ENCODE measurements at regions of chr15 and their contacts with region 1.

Region 1: GRCh38 chr15:78492872-78493271 is 14.5 kb upstream of the HYKK start:
- DNase-seq: no peak
- H3K4me3 Mint-ChIP-seq: no peak overlapping the region
- H3K27ac Mint-ChIP-seq: peak overlapping the region; percentile 37
- H3K4me1 Mint-ChIP-seq: peaks cover 9% of the 10 kb centered on the region
- H3K27me3 Mint-ChIP-seq: no peaks in the 10 kb centered on the region

Region 2: GRCh38 chr15:78276064-78276943 is 216.6 kb before region 1 on chr15:
- intact Hi-C with region 1: loop called (anchors 10 kb)
- DNase-seq: no peak
- H3K4me3 Mint-ChIP-seq: no peak overlapping the region
- H3K27ac Mint-ChIP-seq: no peak overlapping the region
- H3K4me1 Mint-ChIP-seq: no peaks in the 10 kb centered on the region
- H3K27me3 Mint-ChIP-seq: no peaks in the 10 kb centered on the region